Naive thymus-derived CD4-positive, alpha-beta T cell (primary cell): ENCODE measurements at regions of chrX and their contacts with region 1.

Region 1: DNA sequence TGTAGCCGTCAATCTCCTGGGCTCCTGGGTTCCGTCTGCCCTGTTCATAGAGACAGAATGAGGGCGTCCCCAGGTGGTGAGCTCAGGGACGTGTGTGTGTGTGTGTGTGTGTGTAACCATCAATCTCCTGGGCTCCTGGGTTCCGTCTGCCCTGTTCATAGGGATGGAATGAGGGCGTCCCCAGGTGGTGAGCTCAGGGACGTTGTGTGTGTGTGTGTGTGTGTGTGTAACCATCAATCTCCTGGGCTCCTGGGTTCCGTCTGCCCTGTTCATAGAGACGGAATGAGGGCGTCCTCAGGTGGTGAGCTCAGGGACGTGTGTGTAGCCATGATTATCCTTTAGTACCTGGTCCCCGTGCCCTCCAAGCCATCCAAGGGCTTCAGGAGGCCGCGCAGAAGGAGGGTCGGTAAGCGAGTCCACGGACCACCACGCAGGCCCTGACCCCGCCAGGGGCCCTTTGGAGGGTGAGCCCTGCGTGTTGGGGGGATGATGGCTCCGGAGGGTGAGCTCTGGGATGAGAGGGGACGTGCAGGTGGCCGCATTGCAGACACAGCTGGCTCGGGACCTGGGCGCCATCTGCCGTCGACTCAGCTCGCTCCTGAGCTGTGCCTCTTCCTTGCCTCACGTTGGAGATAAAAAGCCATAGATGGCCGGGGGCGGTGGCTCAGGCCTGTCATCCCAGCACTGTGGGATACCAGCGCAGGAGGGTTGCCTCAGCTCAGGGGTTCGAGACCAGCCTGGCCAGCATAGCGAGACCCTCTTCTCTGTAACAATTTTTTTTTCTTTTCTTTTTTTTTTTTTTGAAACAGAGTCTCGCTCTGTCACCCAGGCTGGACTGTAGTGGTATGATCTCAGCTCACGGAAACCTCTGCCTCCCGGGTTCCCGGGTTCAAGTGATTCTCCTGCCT is 5.4 kb upstream of the GTPBP6 start:
- DNase-seq: peak in 3 of 9 donors; percentile 38 to 72 (median 42)
- ATAC-seq: peak; percentile 2
- H3K4me3 ChIP-seq: peak overlapping the region; percentile 32
- H3K4me3 Mint-ChIP-seq: peak overlapping the region in 8 of 10 donors; percentile 56 to 87 (median 80)
- H3K27ac ChIP-seq: no peak overlapping the region
- H3K27ac Mint-ChIP-seq: peak overlapping the region in 8 of 9 donors; percentile 63 to 97 (median 92)
- H3K4me1 ChIP-seq: peaks cover 10 to 12% of the 10 kb centered on the region in 2 donors
- H3K4me1 Mint-ChIP-seq: peaks cover 8 to 40% (median 20%) of the 10 kb centered on the region in 7 donors
- H3K27me3 ChIP-seq: no peaks in the 10 kb centered on the region
- H3K27me3 Mint-ChIP-seq: no peaks in the 10 kb centered on the region

Region 2: GRCh38 chrX:357693-358471 is 33.9 kb after region 1 on chrX:
- CTCF ChIA-PET with region 1: no interaction called
- POLR2A ChIA-PET with region 1: no interaction called
- intact Hi-C with region 1: loop called (anchors 1 to 2 kb)
- DNase-seq: peak in 7 of 9 donors; percentile 60 to 82 (median 76)
- ATAC-seq: peak; percentile 92
- H3K4me3 ChIP-seq: no peak overlapping the region
- H3K4me3 Mint-ChIP-seq: peak overlapping the region; percentile 35 to 81 (median 72)
- H3K27ac ChIP-seq: peak overlapping the region; percentile 71
- H3K27ac Mint-ChIP-seq: peak overlapping the region; percentile 86 to 99 (median 96)
- H3K4me1 ChIP-seq: peaks cover 0 to 19% of the 10 kb centered on the region in 2 donors
- H3K4me1 Mint-ChIP-seq: peaks cover 16 to 32% (median 30%) of the 10 kb centered on the region in 7 donors
- H3K27me3 ChIP-seq: no peaks in the 10 kb centered on the region
- H3K27me3 Mint-ChIP-seq: no peaks in the 10 kb centered on the region

Region 3: DNA sequence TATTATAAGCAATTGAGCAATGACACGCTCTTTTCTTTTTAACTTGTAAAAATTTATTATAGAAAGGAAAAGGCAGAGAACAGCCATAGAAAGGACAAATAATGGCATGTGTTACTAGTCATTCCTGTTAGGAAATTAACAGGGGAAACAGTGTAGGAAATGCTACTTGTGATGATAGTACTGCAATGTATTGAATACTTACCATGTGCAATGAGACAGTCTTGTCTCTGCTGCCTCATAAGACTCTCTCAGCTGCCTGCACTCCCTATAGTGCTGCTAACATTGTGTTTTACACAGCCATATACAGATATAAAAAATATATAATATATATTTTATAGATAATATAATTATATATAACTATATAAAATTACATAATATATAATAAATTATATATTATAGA is 244.3 kb after region 1 on chrX:
- CTCF ChIA-PET with region 1: no interaction called
- POLR2A ChIA-PET with region 1: no interaction called
- intact Hi-C with region 1: no loop called
- DNase-seq: no peak
- ATAC-seq: no peak
- H3K4me3 ChIP-seq: no peak overlapping the region
- H3K4me3 Mint-ChIP-seq: no peak overlapping the region
- H3K27ac ChIP-seq: no peak overlapping the region
- H3K27ac Mint-ChIP-seq: no peak overlapping the region
- H3K4me1 ChIP-seq: no peaks in the 10 kb centered on the region
- H3K4me1 Mint-ChIP-seq: no peaks in the 10 kb centered on the region
- H3K27me3 ChIP-seq: no peaks in the 10 kb centered on the region
- H3K27me3 Mint-ChIP-seq: peaks cover 0 to 16% (median 7%) of the 10 kb centered on the region in 5 donors